Breast epithelium (tissue), 4 donors: ENCODE measurements at regions of chr19 and their contacts with region 1.

Region 1: DNA sequence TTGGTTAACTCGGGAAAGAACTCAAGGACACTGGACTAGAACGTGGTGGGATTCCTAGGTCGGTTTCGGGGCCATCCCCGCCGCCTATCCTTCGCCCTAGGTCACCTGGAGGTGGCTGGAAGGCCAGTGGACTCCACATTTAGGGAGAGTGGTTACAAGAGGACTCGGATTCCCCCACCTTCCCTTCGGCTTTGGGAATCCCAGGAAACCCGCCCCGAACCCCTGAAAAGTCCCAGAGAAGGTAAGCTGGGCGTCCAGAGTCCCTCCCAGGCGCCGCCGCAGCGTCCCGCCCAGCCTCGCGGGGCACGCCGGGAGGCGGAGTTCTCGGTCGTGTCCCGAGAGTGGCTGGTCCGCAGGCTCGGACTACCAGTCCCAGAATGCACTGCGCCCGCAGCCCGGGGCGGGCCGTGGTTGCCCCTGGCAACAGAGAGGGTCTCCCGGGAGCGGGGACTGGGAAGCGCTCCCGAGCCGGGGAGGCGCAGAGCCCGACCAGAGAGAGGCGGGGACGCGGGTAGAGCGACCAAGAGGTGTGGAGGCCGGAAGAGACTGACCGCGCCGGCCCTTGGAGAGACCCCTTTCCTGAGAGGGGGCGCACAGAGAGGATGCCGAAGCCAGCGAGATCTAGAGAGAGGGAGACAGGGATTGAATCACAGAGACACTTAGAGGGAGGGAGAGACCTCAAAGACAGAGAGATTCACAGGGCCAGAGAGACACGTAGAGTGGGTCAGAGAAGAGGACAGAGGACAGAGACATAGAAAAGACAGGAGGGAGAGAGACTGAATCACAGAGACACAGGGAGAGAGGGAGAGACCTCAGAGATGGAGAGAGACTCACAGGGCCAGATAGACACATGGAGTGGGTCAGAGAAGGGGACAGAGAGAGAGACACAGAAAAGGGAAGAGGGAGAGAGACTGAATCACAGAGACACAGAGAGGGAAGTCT is 2.6 kb upstream of the PRKCG start:
- DNase-seq: peak; percentile 83 to 87
- H3K4me3 ChIP-seq: peak overlapping the region; percentile 42 to 72 (median 54)
- H3K27ac ChIP-seq: peak overlapping the region in 1 of 2 donors; percentile 1
- H3K4me1 ChIP-seq: peaks cover 0 to 9% of the 10 kb centered on the region in 2 donors
- H3K27me3 ChIP-seq: peaks cover 0 to 35% of the 10 kb centered on the region in 2 donors
- CTCF ChIP-seq: no peak
- POLR2A ChIP-seq: no peak

Region 2: DNA sequence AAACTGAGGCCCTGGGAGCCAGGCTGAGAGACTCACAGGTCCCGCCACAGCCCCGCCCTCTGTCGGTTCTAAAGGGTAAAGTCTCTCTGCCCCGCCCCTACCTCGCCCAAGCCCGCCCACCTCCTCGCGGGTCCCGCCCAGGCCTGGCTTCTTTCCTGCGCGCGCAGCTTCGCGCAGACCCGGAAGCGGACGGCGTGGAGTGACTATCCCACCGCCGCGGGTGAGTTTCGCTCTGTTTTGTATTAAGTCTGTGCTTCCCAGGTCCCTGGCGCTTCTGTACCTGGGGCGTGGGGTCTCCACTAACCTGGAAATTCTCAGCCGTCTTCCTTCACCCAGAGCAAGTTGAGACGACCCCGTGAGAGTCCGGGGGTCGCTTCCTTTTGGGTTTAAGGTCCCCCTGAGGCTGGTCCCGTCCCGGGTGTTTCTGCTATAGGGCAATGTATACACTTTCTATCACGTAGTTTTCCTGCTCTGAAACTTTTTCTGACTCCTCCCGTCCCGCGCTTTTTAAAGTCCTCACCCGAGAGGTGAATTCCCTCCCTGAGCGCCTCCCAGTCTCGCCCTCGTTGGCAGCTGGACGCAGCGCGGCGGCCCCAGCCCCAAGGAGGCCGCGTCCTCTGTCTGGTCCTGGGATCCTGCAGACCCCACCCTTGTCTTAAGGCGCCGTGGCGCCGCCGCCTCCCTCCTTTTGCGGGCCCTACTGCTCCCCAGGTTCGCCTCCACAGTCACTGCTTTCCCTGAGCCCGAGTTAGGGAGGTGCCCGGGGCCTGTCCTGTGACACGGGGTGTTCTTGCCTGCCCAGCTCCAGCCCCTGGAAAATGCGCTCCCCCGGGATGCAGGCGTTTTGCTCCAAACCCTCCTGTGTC is 484.2 kb before region 1 on chr19 and contains the start of gene ZNF765:
- intact Hi-C with region 1: loop called (anchors 5 kb)
- DNase-seq: peak; percentile 92 to 96
- H3K4me3 ChIP-seq: peak within 1 kb of the TSS; percentile 71 to 83 (median 80)
- H3K27ac ChIP-seq: peak within 1 kb of the TSS; percentile 79 to 87
- H3K4me1 ChIP-seq: no peaks in the 10 kb centered on the region
- H3K27me3 ChIP-seq: no peaks in the 10 kb centered on the region
- CTCF ChIP-seq: peak; percentile 39 to 68 (median 58)
- POLR2A ChIP-seq: peak; percentile 69
- total RNA-seq, gene ZNF765: 9.3 to 18.4 (median 12.1) TPM

Region 3: GRCh38 chr19:53912653-53913052 is 33.2 kb after region 1 on chr19:
- intact Hi-C with region 1: no loop called
- DNase-seq: no peak
- H3K4me3 ChIP-seq: no peak overlapping the region
- H3K27ac ChIP-seq: no peak overlapping the region
- H3K4me1 ChIP-seq: no peaks in the 10 kb centered on the region
- H3K27me3 ChIP-seq: peaks cover 10 to 73% of the 10 kb centered on the region in 2 donors
- CTCF ChIP-seq: no peak
- POLR2A ChIP-seq: no peak

Region 4: DNA sequence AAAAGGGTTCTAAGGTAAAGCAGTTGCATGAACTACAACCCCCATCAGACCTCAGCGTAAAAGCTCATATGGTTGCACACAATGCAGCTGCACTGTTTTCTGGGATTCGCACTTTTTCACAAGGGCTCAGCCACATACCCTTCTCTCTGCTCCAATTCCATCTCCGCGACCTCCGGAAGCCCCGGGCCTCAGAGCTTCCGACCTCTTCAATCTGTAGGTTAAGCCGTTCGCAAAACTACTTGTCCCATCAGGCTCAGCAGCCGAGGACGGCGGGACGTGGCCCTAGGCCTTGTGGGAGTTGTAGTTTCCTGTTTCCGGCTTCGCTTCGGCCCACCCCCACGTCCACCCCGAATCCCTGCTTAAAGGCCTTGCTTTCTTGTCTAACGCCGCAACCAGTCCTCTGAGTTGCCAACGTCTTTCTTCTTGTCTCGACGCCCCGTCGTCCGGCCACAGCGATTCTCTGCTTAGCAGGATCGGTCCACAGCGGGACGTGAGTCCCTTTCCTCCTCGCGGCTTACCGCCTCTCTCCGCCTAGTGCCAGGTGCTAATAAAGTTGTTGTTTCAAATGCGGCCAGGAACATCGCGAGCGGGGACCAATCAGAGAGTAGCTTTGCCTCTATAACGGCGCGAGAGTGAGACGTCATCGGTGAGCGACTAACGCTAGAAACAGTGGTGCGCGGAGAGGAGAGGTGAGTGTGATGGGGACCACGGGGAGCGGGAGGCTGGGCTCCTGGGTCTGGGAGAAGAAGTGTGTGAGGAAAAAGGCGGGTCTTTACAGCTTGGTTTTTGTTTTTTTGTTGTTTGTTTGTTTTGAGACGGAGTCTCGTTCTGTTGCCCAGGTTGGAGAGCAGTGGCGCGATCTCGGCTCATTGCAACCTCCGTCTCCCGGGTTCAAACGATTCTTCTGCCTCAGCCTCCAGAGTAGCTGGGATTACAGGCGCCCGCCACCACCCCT is 236.0 kb after region 1 on chr19 and contains the starts of genes PRPF31 and TFPT:
- intact Hi-C with region 1: loop called (anchors 10 kb)
- DNase-seq: peak; percentile 97
- H3K4me3 ChIP-seq: peak within 1 kb of the TSS; percentile 81 to 88 (median 83)
- H3K27ac ChIP-seq: peak within 1 kb of the TSS; percentile 83
- H3K4me1 ChIP-seq: peaks cover 5 to 10% of the 10 kb centered on the region in 2 donors
- H3K27me3 ChIP-seq: no peaks in the 10 kb centered on the region
- CTCF ChIP-seq: no peak
- POLR2A ChIP-seq: peak; percentile 46
- total RNA-seq, gene PRPF31: 45.5 to 59.6 (median 52.5) TPM
- total RNA-seq, gene TFPT: 11.9 to 16.7 (median 16.2) TPM

Region 5: GRCh38 chr19:54478677-54479266 is 599.4 kb after region 1 on chr19:
- intact Hi-C with region 1: loop called (anchors 10 kb)
- DNase-seq: no peak
- H3K4me3 ChIP-seq: no peak overlapping the region
- H3K27ac ChIP-seq: no peak overlapping the region
- H3K4me1 ChIP-seq: peaks cover 0 to 1% of the 10 kb centered on the region in 2 donors
- H3K27me3 ChIP-seq: no peaks in the 10 kb centered on the region
- CTCF ChIP-seq: peak in 2 of 3 donors; percentile 27 to 46
- POLR2A ChIP-seq: no peak